Esophagus muscularis mucosa (tissue), 4 donors: ENCODE measurements at regions of chr3 and their contacts with region 1.

Region 1: DNA sequence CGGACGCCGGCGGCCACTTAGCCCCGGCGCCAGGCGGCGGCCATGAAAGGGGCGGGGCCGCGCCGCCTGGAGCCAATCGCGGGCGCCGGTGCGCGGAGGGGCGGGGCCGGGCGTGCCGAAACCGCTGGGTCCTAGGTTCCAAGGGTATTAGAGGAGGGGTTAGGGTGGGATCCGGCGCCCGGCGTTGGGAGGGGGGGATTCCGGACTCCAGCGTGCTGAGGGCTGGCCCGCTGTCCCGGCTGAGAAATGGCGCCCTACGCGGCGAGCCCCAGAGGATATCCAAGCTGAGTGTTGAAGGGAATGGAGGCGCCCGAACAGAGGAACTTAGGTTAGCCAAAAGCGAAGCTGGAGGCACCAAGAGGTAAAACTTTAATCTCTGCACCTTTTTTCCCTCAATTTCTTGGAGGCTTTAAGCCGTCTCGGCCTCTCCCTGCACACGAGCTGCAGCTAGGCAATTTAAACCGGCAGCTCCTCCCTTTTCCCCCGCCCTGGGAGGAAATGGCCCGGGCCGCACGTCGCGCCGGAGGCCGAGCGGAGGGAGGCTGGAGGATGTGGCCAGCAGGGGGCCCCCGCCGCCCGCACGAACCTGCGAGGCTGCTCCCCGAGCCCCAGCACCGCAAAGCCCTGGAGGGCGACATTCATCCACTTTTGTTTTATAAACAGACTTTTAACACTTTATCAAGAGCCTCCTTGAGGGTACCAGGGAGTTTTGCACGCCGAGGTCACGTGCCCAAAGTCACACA is at the start of gene XXYLT1:
- DNase-seq: peak; percentile 95
- H3K4me3 ChIP-seq: peak within 1 kb of the TSS; percentile 70 to 90 (median 84)
- H3K27ac ChIP-seq: peak within 1 kb of the TSS; percentile 85 to 90 (median 86)
- H3K4me1 ChIP-seq: peaks cover 21 to 30% (median 27%) of the 10 kb centered on the region in 4 donors
- H3K27me3 ChIP-seq: no peaks in the 10 kb centered on the region
- CTCF ChIP-seq: peak; percentile 89 to 95 (median 95)
- EP300 ChIP-seq: no peak
- POLR2A ChIP-seq: no peak
- total RNA-seq, gene XXYLT1: 8.8 to 18.5 (median 13.9) TPM

Region 2: GRCh38 chr3:195522254-195523023 is 251.2 kb after region 1 on chr3:
- intact Hi-C with region 1: loop called (anchors 1 kb)
- DNase-seq: no peak
- H3K4me3 ChIP-seq: no peak overlapping the region
- H3K27ac ChIP-seq: no peak overlapping the region
- H3K4me1 ChIP-seq: peaks cover 0 to 3% (median 0%) of the 10 kb centered on the region in 4 donors
- H3K27me3 ChIP-seq: no peaks in the 10 kb centered on the region
- CTCF ChIP-seq: peak; percentile 69 to 84 (median 76)
- EP300 ChIP-seq: no peak
- POLR2A ChIP-seq: no peak